ENCODE measurements at regions of chr1 and their contacts with region 1.

Region 1: GRCh38 chr1:51519048-51519864 is at the start of gene EPS15:
- DNase-seq: peak; percentile 97
- total RNA-seq, gene EPS15: 46.6 TPM

Region 2: DNA sequence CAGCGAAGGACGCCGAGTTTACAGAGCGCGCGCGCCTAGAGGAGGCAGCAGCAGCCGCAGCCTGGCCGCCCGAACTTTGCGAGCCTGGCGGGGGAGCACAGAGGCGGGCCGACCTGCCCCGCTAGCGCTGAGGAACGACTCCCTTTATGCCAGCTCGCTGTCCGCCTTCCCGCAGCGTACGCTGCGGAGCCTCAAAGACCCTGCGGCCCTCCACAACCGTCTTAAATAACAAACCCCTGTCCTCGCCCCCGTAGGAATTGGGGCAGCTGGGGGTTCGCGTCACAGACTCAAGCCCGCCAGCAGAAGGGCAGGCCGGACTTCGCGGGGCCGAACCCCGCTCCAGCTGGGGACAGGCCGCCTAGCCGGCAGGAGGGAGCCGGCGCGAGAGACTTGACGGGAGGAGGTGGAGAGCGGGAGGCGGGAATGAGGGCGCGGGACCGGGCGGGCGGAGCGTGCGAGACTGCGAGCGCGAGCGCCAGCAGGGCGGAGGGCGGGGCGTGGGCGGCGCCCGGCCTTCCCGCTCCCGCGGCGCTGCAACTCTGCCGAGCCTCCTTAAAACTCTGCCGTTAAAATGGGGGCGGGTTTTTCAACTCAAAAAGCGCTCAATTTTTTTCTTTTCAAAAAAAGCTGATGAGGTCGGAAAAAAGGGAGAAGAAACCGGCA is 551.0 kb before region 1 on chr1:
- intact Hi-C with region 1: loop called (anchors 5 kb)
- DNase-seq: peak; percentile 97

Region 3: DNA sequence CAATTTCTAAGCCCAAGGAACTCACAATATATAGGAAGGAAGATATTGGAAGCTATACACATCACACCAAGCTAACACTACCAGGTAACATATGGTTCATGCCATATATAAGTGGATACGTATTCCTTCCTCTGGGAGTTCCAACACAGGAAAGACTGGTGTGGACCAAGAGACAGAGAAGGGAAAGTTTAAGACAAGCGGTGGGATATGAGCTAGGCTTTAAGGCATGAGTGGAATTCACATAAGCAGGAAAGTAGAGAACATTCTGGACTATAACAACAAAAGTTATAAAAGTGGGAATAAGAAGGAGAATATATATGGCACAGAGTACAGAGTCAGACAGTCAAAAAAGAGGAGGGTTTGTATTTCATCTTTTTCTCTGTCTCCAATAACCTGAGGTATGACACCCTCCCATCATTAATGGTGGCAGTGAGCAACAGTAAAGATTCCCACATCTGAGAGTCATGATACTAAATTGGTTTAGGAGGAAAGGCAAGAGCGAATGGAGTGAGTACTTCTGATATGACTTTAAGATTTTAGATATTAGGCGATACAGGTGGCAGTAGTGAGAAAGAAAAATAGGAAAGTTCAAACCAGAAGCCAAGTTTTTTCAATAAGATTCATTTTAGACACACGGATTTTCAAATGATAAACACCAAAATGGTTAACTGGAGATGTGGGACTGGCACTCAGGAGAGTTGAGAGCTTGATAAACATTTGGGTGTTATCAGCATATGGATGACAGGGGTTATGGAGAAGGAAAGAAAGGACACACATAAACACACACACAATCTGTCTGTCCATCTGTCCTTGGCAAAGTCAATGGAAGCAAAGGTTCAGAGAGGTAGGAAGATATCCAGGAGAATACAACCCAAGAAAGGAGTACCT is 101.5 kb before region 1 on chr1:
- intact Hi-C with region 1: loop called (anchors 5 kb)
- DNase-seq: no peak

Region 4: GRCh38 chr1:51740652-51741051 is 221.4 kb after region 1 on chr1:
- intact Hi-C with region 1: no loop called
- DNase-seq: no peak